ENCODE measurements at regions of chr5 and their contacts with region 1.

Region 1: DNA sequence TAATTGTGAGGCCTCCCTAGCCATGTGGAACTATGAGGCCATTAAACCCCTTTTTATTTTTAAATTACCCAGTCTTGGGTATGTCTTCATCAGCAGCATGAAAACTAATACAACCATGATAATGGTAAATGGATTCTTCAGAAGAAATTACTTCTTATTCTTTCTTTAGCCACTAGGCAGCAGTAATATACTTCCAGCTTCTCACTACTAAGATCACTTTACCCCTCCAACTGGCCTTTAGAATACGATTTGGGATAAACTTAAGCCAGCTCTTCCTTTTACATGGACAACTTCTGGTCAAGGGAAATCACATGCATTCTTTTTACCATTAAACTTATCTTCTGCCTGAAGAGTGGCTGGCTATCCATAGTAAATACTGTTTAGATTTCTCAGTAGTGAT is 355.4 kb downstream of the MAN2A1 start:
- DNase-seq: peak; percentile 4
- H3K4me3 ChIP-seq: no peak overlapping the region
- H3K27ac ChIP-seq: no peak overlapping the region
- H3K4me1 ChIP-seq: no peaks in the 10 kb centered on the region
- H3K27me3 ChIP-seq: peaks cover 3% of the 10 kb centered on the region
- CTCF ChIP-seq: peak; percentile 32 to 57

Region 2: DNA sequence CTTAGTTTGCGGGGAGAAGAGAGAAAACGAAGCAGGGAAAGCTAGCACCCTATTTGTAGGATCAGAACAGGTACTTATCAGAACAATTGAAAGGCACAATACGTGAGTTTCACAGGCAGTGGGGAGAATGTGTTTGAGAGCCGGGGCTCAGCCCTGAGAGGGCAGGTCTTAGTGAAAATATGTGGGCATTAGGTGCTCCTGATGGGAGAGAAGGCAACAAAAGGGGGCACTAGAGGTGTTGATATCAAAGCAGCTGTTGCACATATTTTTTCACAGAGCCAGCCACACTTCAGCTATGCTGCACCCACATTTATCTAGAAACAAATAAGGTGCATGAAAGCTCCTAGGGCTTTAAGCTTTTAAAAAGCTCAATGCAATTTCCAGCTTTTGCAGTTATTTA is 455.2 kb before region 1 on chr5:
- CTCF ChIA-PET with region 1: no interaction called
- dilution Hi-C with region 1: no loop called
- in situ Hi-C with region 1: no loop called
- intact Hi-C with region 1: loop called (anchors 10 kb)
- DNase-seq: peak; percentile 9
- H3K4me3 ChIP-seq: no peak overlapping the region
- H3K27ac ChIP-seq: no peak overlapping the region
- H3K4me1 ChIP-seq: no peaks in the 10 kb centered on the region
- H3K27me3 ChIP-seq: no peaks in the 10 kb centered on the region
- CTCF ChIP-seq: peak in 1 of 2 donors; percentile 32

Region 3: GRCh38 chr5:109959652-109960051 is 85.5 kb before region 1 on chr5:
- CTCF ChIA-PET with region 1: no interaction called
- dilution Hi-C with region 1: no loop called
- in situ Hi-C with region 1: no loop called
- intact Hi-C with region 1: no loop called
- DNase-seq: no peak
- H3K4me3 ChIP-seq: no peak overlapping the region
- H3K27ac ChIP-seq: no peak overlapping the region
- H3K4me1 ChIP-seq: no peaks in the 10 kb centered on the region
- H3K27me3 ChIP-seq: peaks cover 3% of the 10 kb centered on the region
- CTCF ChIP-seq: no peak

Region 4: DNA sequence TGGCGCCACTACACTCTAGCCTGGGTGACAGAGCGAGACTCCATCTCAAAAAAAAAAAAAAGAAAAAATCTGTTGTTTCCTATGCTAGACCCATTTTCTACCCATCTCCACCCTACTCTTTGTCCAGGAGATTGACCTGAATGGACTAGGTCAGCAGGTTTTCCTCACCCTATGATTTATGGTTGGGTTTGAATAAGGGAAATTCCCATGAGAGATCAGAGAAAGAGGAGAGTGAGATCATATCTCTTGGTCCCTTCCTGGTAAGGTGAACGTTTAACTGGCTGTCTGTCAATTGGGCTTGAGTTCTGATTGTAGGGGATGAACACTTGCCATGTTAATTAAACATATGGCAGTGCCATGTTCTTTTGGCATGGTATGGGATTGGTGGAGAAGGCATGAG is 32.0 kb after region 1 on chr5:
- CTCF ChIA-PET with region 1: no interaction called
- dilution Hi-C with region 1: no loop called
- in situ Hi-C with region 1: no loop called
- intact Hi-C with region 1: no loop called
- DNase-seq: no peak
- H3K4me3 ChIP-seq: no peak overlapping the region
- H3K27ac ChIP-seq: no peak overlapping the region
- H3K4me1 ChIP-seq: no peaks in the 10 kb centered on the region
- H3K27me3 ChIP-seq: peaks cover 1% of the 10 kb centered on the region
- CTCF ChIP-seq: no peak

Region 5: DNA sequence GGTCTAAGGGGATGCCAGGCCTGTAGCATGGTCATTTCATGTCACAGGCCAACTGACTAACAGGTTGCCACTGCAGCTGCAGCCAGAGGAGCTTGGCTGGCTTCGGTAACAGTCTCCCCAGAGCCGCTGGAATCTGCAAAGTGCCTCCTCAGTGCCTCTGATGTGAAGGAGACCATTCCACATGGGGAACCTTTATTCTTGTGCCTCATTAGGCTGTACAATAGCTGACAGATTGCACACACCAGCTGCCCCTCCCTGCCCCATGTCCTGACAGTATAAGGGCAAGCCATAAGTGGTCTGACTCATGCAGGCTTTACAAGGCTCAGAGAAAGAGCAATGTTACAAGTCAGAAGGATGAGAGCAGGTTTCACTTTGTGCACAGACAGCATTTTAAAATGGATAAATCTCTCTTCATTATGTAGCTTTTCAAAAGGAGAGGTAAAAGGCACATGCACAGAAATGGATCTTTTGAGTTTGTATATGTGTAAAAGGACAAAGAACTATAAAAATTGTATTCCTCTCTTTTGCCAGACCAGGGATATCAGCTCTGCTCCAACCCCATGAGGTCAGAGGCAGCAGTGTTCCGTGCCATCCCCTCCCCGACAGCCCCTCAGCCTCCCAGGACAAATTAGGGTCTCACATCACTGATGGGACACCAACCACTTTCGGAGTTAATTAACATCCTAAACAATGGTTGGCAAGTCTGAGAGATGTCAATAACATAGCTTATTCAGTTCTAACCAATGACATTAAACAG is 213.5 kb after region 1 on chr5:
- CTCF ChIA-PET with region 1: no interaction called
- dilution Hi-C with region 1: no loop called
- in situ Hi-C with region 1: no loop called
- intact Hi-C with region 1: loop called (anchors 10 kb)
- DNase-seq: peak; percentile 44
- H3K4me3 ChIP-seq: no peak overlapping the region
- H3K27ac ChIP-seq: no peak overlapping the region
- H3K4me1 ChIP-seq: no peaks in the 10 kb centered on the region
- H3K27me3 ChIP-seq: peaks cover 2% of the 10 kb centered on the region
- CTCF ChIP-seq: no peak

Region 6: GRCh38 chr5:110414360-110414759 is 369.2 kb after region 1 on chr5:
- CTCF ChIA-PET with region 1: no interaction called
- dilution Hi-C with region 1: no loop called
- in situ Hi-C with region 1: no loop called
- intact Hi-C with region 1: loop called (anchors 1 kb)
- DNase-seq: no peak
- H3K4me3 ChIP-seq: no peak overlapping the region
- H3K27ac ChIP-seq: no peak overlapping the region
- H3K4me1 ChIP-seq: no peaks in the 10 kb centered on the region
- H3K27me3 ChIP-seq: no peaks in the 10 kb centered on the region
- CTCF ChIP-seq: peak; percentile 21 to 52

Region 7: GRCh38 chr5:110590187-110590586 is 545.0 kb after region 1 on chr5:
- CTCF ChIA-PET with region 1: no interaction called
- dilution Hi-C with region 1: no loop called
- in situ Hi-C with region 1: no loop called
- intact Hi-C with region 1: loop called (anchors 1 kb)
- DNase-seq: peak; percentile 5
- H3K4me3 ChIP-seq: no peak overlapping the region
- H3K27ac ChIP-seq: no peak overlapping the region
- H3K4me1 ChIP-seq: no peaks in the 10 kb centered on the region
- H3K27me3 ChIP-seq: peaks cover 4% of the 10 kb centered on the region
- CTCF ChIP-seq: peak; percentile 56 to 58

Region 8: DNA sequence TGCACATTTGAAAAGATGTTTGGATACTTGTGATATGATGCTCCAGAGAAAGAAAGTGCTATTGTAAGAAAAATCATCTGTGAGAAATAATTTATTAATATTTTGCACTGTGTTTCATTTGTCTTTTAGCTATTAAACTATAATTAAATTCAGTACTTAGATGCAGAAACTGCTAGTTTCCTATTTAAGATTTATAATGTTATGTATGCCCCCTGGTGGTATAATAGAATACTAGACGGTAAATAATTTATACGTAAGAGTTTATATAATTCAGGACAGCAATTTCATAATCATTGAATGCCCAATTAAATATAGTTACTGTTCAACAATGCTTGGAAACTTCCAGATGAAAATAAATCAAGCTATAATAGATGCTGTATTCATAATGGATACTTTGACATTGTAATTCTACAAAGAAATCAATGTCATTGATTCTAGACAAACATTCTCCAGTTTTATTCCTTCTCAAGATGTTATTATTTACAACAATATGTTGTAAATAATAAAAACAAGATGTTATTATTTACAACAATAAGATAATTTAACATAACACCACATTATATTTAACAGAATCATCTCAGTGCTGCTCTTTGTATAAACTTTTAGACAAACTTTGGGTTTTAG is 580.3 kb after region 1 on chr5:
- CTCF ChIA-PET with region 1: no interaction called
- dilution Hi-C with region 1: no loop called
- in situ Hi-C with region 1: no loop called
- intact Hi-C with region 1: loop called (anchors 10 kb)
- DNase-seq: peak; percentile 2
- H3K4me3 ChIP-seq: no peak overlapping the region
- H3K27ac ChIP-seq: no peak overlapping the region
- H3K4me1 ChIP-seq: no peaks in the 10 kb centered on the region
- H3K27me3 ChIP-seq: no peaks in the 10 kb centered on the region
- CTCF ChIP-seq: peak; percentile 36 to 39

Measured in mammary epithelial cell (primary cell).